ENCODE measurements at regions of chr1 and their contacts with region 1.

Region 1: GRCh38 chr1:186363891-186364290 is 11.2 kb downstream of the TPR start:
- H3K4me3 ChIP-seq: no peak overlapping the region
- H3K27ac ChIP-seq: no peak overlapping the region
- H3K4me1 ChIP-seq: no peaks in the 10 kb centered on the region
- CTCF ChIP-seq: no peak

Region 2: GRCh38 chr1:186272486-186272885 is 91.4 kb before region 1 on chr1:
- CTCF ChIA-PET with region 1: no interaction called
- POLR2A ChIA-PET with region 1: no interaction called
- H3K4me3 ChIP-seq: no peak overlapping the region
- H3K27ac ChIP-seq: no peak overlapping the region
- H3K4me1 ChIP-seq: no peaks in the 10 kb centered on the region
- CTCF ChIP-seq: no peak

Region 3: GRCh38 chr1:186330758-186331157 is 33.1 kb before region 1 on chr1:
- CTCF ChIA-PET with region 1: interaction called, 13 read pairs
- POLR2A ChIA-PET with region 1: interaction called, 3 read pairs
- H3K4me3 ChIP-seq: no peak overlapping the region
- H3K27ac ChIP-seq: no peak overlapping the region
- H3K4me1 ChIP-seq: no peaks in the 10 kb centered on the region
- CTCF ChIP-seq: no peak

Region 4: GRCh38 chr1:186340772-186341171 is 23.1 kb before region 1 on chr1:
- CTCF ChIA-PET with region 1: no interaction called
- POLR2A ChIA-PET with region 1: no interaction called
- H3K4me3 ChIP-seq: no peak overlapping the region
- H3K27ac ChIP-seq: no peak overlapping the region
- H3K4me1 ChIP-seq: no peaks in the 10 kb centered on the region
- CTCF ChIP-seq: no peak